Activated T-helper 1 cell treated with anti-CD3 and anti-CD28 coated beads, Interleukin-12 subunit alpha, Interleukin-12 subunit beta, Interleukin-2, Interleukin-4 antibody, amounts not matched to agents 30 ng/mL and 10 ng/mL and 1 ng/mL, durations not matched to agents 14 hours and 24 hours and 36 hours (primary cell): ENCODE measurements at regions of chr2 and their contacts with region 1.

Region 1: GRCh38 chr2:12293874-12294273 is 422.9 kb upstream of the TRIB2 start:
- DNase-seq: peak; percentile 27
- H3K4me3 Mint-ChIP-seq: peak overlapping the region; percentile 35
- H3K27ac Mint-ChIP-seq: peak overlapping the region; percentile 69
- H3K4me1 Mint-ChIP-seq: peaks cover 49% of the 10 kb centered on the region
- H3K27me3 Mint-ChIP-seq: peaks cover 3% of the 10 kb centered on the region

Region 2: GRCh38 chr2:11753886-11754699 is 539.8 kb before region 1 on chr2:
- intact Hi-C with region 1: loop called (anchors 5 kb)
- DNase-seq: peak; percentile 57
- H3K4me3 Mint-ChIP-seq: peak overlapping the region; percentile 69
- H3K27ac Mint-ChIP-seq: peak overlapping the region; percentile 82
- H3K4me1 Mint-ChIP-seq: peaks cover 85% of the 10 kb centered on the region
- H3K27me3 Mint-ChIP-seq: no peaks in the 10 kb centered on the region

Region 3: DNA sequence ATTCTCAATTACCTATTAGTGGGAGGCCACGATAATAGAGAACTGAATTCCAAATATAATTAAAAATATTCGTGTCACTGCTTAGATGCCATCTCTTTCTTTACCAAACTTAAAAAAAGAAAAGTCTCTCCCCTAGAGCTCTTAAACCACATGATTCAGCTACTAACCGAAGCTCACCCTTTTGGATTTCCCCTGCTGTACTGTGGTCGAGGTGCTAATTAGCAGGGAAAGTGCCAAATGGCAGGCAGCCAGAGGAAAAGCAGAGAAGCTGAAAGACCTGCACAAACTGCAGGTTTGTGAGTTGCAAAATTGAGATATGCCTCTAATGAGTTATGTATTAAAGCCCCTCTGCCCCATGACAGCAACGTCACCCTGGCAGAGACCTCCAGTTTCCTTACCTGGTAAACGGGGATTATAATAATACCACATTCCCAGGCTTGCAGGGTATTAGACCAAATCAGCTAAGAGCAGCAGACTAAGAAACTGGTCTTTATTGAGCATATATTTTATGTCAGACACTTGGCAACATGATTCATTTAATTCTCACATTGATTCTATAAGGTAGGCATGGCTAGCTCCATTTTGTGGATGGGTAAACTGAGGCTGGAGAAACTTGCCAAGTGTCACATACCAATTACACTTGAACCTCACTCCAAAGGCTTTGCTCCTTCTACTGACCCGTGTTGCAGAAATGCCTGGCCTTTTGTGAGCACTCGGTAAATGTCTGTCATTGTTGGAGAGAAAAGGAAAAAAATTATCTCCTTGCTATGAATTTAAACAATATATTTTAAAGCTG is 287.8 kb before region 1 on chr2:
- intact Hi-C with region 1: loop called (anchors 2 kb)
- DNase-seq: peak; percentile 45
- H3K4me3 Mint-ChIP-seq: no peak overlapping the region
- H3K27ac Mint-ChIP-seq: no peak overlapping the region
- H3K4me1 Mint-ChIP-seq: peaks cover 7% of the 10 kb centered on the region
- H3K27me3 Mint-ChIP-seq: peaks cover 58% of the 10 kb centered on the region

Region 4: DNA sequence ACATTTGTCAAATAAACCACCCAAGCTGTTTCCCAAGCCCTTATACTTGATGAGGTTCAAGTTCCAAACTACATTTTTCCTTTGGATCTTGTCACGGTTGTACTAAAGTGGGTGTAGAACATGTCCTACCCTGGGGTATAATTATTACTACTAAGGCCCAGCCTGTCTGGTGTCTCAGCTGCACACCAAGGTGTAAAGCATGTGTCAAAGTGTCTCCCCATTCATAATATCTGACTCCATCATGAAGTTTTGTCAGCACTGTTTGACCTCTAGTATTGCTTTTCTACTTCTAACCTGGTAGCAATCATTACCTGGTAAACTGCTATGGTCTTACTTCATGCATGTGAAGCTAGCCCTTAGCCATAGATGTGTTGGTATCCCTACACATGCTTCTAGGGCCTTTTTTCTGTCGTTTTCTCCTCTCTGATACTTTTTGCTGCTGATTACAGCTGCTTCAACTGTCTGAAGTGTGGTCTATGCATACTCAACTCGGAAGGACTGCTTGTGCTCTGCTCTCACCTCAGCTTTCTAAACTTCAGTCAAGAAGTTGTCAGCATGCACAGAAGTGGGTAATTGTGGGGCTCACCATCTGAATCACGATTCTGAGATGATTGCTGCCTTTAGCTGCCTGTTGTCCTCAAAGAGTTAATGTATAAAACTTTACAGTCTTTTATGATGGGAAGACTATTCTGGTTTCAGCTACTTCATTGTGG is 22.8 kb before region 1 on chr2:
- intact Hi-C with region 1: loop called (anchors 1 kb)
- DNase-seq: no peak
- H3K4me3 Mint-ChIP-seq: no peak overlapping the region
- H3K27ac Mint-ChIP-seq: no peak overlapping the region
- H3K4me1 Mint-ChIP-seq: peaks cover 27% of the 10 kb centered on the region
- H3K27me3 Mint-ChIP-seq: peaks cover 11% of the 10 kb centered on the region

Region 5: DNA sequence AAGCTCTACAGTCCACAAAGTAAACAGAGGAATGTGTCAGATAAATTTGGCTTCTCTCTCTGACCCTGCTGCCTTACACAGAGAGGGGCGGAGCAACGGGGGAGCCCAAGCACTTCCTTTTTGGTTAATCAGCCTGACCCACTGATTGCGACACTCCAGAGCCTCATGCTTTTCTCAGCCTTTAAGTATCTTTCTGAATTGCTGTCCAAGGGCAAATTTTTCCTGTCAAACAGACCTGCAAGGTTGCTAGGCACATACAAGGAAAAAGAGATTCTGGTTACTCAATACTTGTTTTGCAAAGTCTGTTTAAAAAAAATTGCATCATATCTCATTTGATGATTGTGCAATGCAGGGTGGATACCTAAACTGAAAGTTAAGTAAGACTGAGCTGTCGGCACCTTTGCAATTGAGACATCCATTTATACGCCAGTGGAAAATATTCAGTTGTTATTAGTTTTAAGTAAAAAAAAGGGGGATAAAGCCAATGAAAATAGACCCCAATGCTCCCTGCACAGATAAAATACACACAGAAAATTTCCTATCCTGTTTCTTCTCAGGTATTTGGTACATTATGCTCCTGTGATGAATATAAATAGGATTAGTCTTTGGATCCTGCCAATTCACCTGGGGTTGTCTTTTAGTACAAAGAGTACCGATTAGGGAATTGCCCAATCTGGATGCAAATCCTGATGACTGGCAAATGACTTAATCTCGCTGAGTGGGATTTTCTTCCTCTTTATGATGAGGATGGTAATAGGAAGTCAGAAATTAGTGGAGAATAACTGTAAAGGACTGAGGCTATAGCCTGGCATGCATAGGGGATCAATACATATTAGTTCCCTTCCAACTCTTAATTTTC is 162.6 kb after region 1 on chr2:
- intact Hi-C with region 1: loop called (anchors 1 kb)
- DNase-seq: peak; percentile 40
- H3K4me3 Mint-ChIP-seq: peak overlapping the region; percentile 66
- H3K27ac Mint-ChIP-seq: peak overlapping the region; percentile 83
- H3K4me1 Mint-ChIP-seq: peaks cover 33% of the 10 kb centered on the region
- H3K27me3 Mint-ChIP-seq: no peaks in the 10 kb centered on the region

Region 6: GRCh38 chr2:12555012-12555645 is 261.3 kb after region 1 on chr2:
- intact Hi-C with region 1: loop called (anchors 1 kb)
- DNase-seq: no peak
- H3K4me3 Mint-ChIP-seq: peak overlapping the region; percentile 44
- H3K27ac Mint-ChIP-seq: peak overlapping the region; percentile 88
- H3K4me1 Mint-ChIP-seq: peaks cover 41% of the 10 kb centered on the region
- H3K27me3 Mint-ChIP-seq: no peaks in the 10 kb centered on the region

Region 7: GRCh38 chr2:12856934-12857601 is 563.2 kb after region 1 on chr2:
- intact Hi-C with region 1: loop called (anchors 2 kb)
- DNase-seq: peak; percentile 26
- H3K4me3 Mint-ChIP-seq: no peak overlapping the region
- H3K27ac Mint-ChIP-seq: no peak overlapping the region
- H3K4me1 Mint-ChIP-seq: peaks cover 18% of the 10 kb centered on the region
- H3K27me3 Mint-ChIP-seq: no peaks in the 10 kb centered on the region